H1 (cell line): ENCODE measurements at regions of chr14 and their contacts with region 1.

Region 1: DNA sequence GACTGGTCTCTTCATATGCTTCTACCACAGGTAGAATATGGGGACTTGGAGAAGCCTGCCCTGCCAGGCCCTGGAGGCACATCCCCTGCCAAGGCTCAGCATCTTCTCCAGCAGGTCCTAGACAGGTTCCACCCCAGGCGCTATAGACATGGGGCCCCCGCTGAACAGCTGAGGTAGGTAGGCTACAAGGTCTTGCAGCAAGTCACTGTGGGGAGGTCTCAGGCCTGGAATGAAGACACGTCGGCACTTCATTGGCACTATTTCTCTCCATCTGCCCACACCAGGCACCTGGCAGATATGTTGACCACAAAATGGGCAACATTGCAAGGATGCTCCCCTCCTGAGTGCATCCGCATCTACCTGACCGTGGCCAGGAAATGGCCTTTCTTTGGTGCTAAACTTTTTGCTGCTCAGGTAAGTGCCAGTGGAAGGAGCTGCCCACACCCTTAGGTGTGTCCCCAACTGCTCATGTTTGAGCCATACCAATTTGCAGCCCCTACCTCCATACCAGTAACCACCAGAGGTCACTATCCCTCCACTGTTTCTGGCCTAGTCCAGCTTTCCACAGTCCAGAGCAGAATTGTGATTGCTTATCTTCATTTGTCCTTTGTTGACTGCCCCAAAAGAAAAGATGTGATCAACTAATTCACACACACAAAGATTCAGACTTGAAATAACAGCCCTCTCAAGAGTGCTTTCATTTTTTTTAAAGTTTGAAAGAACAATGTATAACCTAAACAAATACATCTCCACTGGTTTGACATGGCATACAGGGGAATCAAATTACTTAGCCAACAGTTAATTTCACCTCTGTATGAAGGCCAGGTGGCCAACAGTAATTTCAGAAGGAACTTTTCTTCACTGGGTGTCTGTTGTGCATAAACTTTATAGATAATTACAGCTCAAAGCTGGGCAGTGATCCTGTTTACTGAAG is 16.1 kb downstream of the PIGH start:
- DNase-seq: no peak
- H3K4me3 ChIP-seq: no peak overlapping the region
- H3K27ac ChIP-seq: no peak overlapping the region
- H3K4me1 ChIP-seq: no peaks in the 10 kb centered on the region
- H3K27me3 ChIP-seq: no peaks in the 10 kb centered on the region
- CTCF ChIP-seq: peak; percentile 54 to 83 (median 80)
- EP300 ChIP-seq: no peak
- POLR2A ChIP-seq: no peak
- RAD21 ChIP-seq: peak; percentile 89 to 90

Region 2: GRCh38 chr14:67650694-67651093 is 66.7 kb after region 1 on chr14:
- CTCF ChIA-PET with region 1: interaction called, 34 read pairs
- POLR2A ChIA-PET with region 1: no interaction called
- DNase-seq: no peak
- H3K4me3 ChIP-seq: no peak overlapping the region
- H3K27ac ChIP-seq: no peak overlapping the region
- H3K4me1 ChIP-seq: no peaks in the 10 kb centered on the region
- H3K27me3 ChIP-seq: no peaks in the 10 kb centered on the region
- CTCF ChIP-seq: no peak
- EP300 ChIP-seq: no peak
- POLR2A ChIP-seq: no peak
- RAD21 ChIP-seq: no peak

Region 3: GRCh38 chr14:67746927-67747326 is 162.9 kb after region 1 on chr14:
- CTCF ChIA-PET with region 1: no interaction called
- POLR2A ChIA-PET with region 1: no interaction called
- DNase-seq: no peak
- H3K4me3 ChIP-seq: no peak overlapping the region
- H3K27ac ChIP-seq: no peak overlapping the region
- H3K4me1 ChIP-seq: no peaks in the 10 kb centered on the region
- H3K27me3 ChIP-seq: no peaks in the 10 kb centered on the region
- CTCF ChIP-seq: no peak
- EP300 ChIP-seq: no peak
- POLR2A ChIP-seq: no peak
- RAD21 ChIP-seq: no peak